Spleen (tissue), 13 donors: ENCODE measurements at regions of chr6 and their contacts with region 1.

Region 1: GRCh38 chr6:43143235-43144124 is 27.6 kb upstream of the SRF start:
- DNase-seq: peak; percentile 93
- H3K4me3 ChIP-seq: peak overlapping the region in 2 of 8 donors; percentile 6 to 35
- H3K27ac ChIP-seq: peak overlapping the region in 2 of 8 donors; percentile 42 to 50
- H3K4me1 ChIP-seq: peaks cover 8 to 19% (median 10%) of the 10 kb centered on the region in 6 donors
- H3K27me3 ChIP-seq: no peaks in the 10 kb centered on the region
- CTCF ChIP-seq: peak; percentile 76 to 96 (median 89)
- POLR2A ChIP-seq: no peak

Region 2: DNA sequence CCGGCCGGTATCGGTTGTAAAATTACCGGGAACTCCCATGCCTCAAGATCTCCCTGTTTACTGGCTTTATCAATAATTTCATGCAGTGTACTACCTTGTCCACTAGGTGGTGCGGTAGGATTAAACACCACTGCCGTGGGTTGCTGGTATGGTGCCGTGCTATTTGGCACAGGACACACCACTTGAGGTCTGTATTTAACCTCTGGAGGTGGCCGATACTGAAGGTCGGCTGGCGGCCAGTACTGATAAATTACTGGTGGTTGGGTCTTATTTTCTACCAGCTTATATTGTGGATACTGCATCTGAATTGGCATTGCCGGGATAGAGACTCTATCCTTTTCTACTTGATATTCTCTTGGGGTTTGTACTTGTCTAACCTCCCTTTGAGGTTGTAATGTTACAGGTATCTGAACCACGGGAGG is 241.9 kb before region 1 on chr6:
- intact Hi-C with region 1: loop called (anchors 5 kb)
- DNase-seq: peak; percentile 87
- H3K4me3 ChIP-seq: no peak overlapping the region
- H3K27ac ChIP-seq: peak overlapping the region in 1 of 8 donors; percentile 5
- H3K4me1 ChIP-seq: peaks cover 5 to 42% (median 23%) of the 10 kb centered on the region in 6 donors
- H3K27me3 ChIP-seq: no peaks in the 10 kb centered on the region
- CTCF ChIP-seq: peak; percentile 70 to 93 (median 89)
- POLR2A ChIP-seq: no peak